Right cardiac atrium (tissue), 5 donors: ENCODE measurements at regions of chr13 and their contacts with region 1.

Region 1: DNA sequence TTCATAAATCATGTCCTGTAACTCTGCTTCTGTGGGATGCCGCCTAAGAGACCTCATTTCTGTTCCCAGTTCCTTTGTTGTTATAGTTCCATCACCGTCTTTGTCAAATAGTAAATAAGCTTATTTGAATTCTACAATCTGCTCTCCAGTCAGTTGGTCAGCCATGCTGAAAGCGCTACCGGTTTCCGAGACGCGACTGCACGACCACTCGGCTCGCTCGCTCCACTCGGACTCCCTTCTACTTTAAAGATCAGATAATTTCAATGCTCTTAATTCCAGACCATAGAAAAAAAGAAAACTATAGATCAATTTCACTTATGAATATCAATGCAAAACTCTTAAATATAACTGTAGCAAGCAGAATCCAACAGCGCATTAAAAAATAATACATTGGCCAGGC is 64.2 kb upstream of the STK24 start:
- DNase-seq: no peak
- ATAC-seq: no peak
- H3K4me3 ChIP-seq: no peak overlapping the region
- H3K27ac ChIP-seq: no peak overlapping the region
- H3K4me1 ChIP-seq: no peaks in the 10 kb centered on the region
- H3K27me3 ChIP-seq: no peaks in the 10 kb centered on the region

Region 2: DNA sequence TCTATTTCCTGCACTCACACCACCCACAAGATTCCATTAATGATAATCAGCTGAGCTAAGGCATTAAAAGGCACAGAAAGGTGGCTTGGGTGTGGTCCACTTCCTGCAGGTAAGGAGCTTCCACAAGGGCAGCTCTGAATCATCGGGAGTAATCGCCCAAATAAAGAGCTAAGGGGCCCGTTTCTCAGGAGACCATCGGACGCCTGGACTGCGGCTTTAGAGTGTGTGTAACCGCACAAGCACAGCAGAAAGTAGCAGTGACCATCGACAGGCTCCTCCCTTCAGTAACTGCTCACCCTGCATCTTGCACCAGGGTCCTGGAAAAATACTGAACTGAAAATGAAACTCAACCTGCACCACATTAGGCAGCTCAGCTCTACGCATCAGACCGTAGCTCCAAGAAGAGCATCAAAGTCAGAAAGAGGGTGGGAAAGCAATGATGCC is 70.1 kb before region 1 on chr13:
- intact Hi-C with region 1: no loop called
- DNase-seq: no peak
- ATAC-seq: peak; percentile 46 to 55
- H3K4me3 ChIP-seq: peak overlapping the region; percentile 46
- H3K27ac ChIP-seq: peak overlapping the region; percentile 61
- H3K4me1 ChIP-seq: peaks cover 26% of the 10 kb centered on the region
- H3K27me3 ChIP-seq: no peaks in the 10 kb centered on the region

Region 3: DNA sequence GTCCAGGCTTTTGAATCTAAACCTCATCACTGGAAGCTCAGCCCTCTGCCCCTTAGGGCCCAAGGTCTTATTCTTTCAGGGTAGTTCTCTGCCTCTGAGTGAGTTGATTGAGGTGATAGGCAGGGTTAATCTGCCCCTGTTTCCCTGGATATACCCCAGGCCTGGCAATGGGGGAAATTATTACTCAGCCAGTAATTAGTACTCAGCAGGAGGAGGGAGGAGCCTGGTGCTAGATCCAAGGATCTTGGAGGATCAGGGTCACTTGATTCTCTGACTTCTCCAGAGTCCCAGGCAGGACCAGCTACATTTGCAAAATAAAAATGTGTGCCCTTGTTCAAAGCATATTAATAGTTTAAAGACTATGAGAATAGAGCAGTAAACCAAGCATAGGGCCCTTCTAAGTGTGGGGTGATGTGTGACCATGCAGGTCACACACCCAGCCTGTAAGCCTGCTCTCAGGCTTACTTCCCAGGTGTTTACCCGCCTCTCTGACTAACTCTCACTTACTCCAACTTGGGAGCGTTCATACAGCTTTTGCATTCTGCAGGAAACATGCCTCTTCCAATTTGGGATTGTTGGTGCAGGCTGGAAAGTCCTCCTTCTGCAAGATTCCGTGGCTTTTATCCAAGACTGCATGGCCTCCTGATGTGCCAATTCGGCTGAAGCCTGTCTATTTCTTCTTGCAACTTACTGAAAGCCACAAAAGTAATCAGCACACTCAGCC is 56.2 kb before region 1 on chr13:
- intact Hi-C with region 1: loop called in 1 of 4 experiments (anchors 5 kb)
- DNase-seq: no peak
- ATAC-seq: peak in 1 of 2 donors; percentile 12
- H3K4me3 ChIP-seq: no peak overlapping the region
- H3K27ac ChIP-seq: no peak overlapping the region
- H3K4me1 ChIP-seq: no peaks in the 10 kb centered on the region
- H3K27me3 ChIP-seq: no peaks in the 10 kb centered on the region